ENCODE measurements at regions of chr7 and their contacts with region 1.

Region 1: GRCh38 chr7:84446991-84447480 is 252.4 kb upstream of the SEMA3A start:
- DNase-seq: no peak
- ATAC-seq: no peak
- H3K4me3 ChIP-seq: no peak overlapping the region
- H3K27ac ChIP-seq: no peak overlapping the region
- H3K4me1 ChIP-seq: peaks cover 14% of the 10 kb centered on the region
- H3K27me3 ChIP-seq: no peaks in the 10 kb centered on the region
- CTCF ChIP-seq: no peak

Region 2: GRCh38 chr7:84372155-84372621 is 74.8 kb before region 1 on chr7:
- CTCF ChIA-PET with region 1: no interaction called
- POLR2A ChIA-PET with region 1: no interaction called
- intact Hi-C with region 1: loop called (anchors 2 kb)
- DNase-seq: peak; percentile 88
- ATAC-seq: peak; percentile 88
- H3K4me3 ChIP-seq: no peak overlapping the region
- H3K27ac ChIP-seq: peak overlapping the region; percentile 80
- H3K4me1 ChIP-seq: peaks cover 34% of the 10 kb centered on the region
- H3K27me3 ChIP-seq: no peaks in the 10 kb centered on the region
- CTCF ChIP-seq: no peak

Region 3: GRCh38 chr7:84790882-84791281 is 343.8 kb after region 1 on chr7:
- CTCF ChIA-PET with region 1: interaction called, 12 read pairs
- POLR2A ChIA-PET with region 1: no interaction called
- intact Hi-C with region 1: no loop called
- DNase-seq: no peak
- ATAC-seq: no peak
- H3K4me3 ChIP-seq: no peak overlapping the region
- H3K27ac ChIP-seq: no peak overlapping the region
- H3K4me1 ChIP-seq: no peaks in the 10 kb centered on the region
- H3K27me3 ChIP-seq: no peaks in the 10 kb centered on the region
- CTCF ChIP-seq: no peak

Measured in PC-3 (cell line).